ENCODE measurements at regions of chrX and their contacts with region 1.

Region 1: GRCh38 chrX:154547245-154548027 is at the start of gene IKBKG:
- DNase-seq: peak; percentile 86
- ATAC-seq: peak; percentile 81
- H3K4me3 Mint-ChIP-seq: peak within 1 kb of the TSS; percentile 86
- H3K27ac Mint-ChIP-seq: peak within 1 kb of the TSS; percentile 95
- H3K4me1 Mint-ChIP-seq: peaks cover 45% of the 10 kb centered on the region
- H3K27me3 Mint-ChIP-seq: no peaks in the 10 kb centered on the region
- CTCF ChIP-seq: no peak
- total RNA-seq, gene IKBKG: 52.9 and 61.1 TPM in 2 replicates

Region 2: GRCh38 chrX:153627675-153628111 is 919.7 kb before region 1 on chrX:
- CTCF ChIA-PET with region 1: no interaction called
- POLR2A ChIA-PET with region 1: no interaction called
- intact Hi-C with region 1: no loop called
- DNase-seq: no peak
- ATAC-seq: no peak
- H3K4me3 Mint-ChIP-seq: no peak overlapping the region
- H3K27ac Mint-ChIP-seq: no peak overlapping the region
- H3K4me1 Mint-ChIP-seq: no peaks in the 10 kb centered on the region
- H3K27me3 Mint-ChIP-seq: peaks cover 11% of the 10 kb centered on the region
- CTCF ChIP-seq: no peak

Region 3: GRCh38 chrX:154329294-154329693 is 218.1 kb before region 1 on chrX:
- CTCF ChIA-PET with region 1: no interaction called
- POLR2A ChIA-PET with region 1: interaction called, 10 read pairs
- intact Hi-C with region 1: no loop called
- DNase-seq: no peak
- ATAC-seq: no peak
- H3K4me3 Mint-ChIP-seq: no peak overlapping the region
- H3K27ac Mint-ChIP-seq: no peak overlapping the region
- H3K4me1 Mint-ChIP-seq: peaks cover 38% of the 10 kb centered on the region
- H3K27me3 Mint-ChIP-seq: no peaks in the 10 kb centered on the region
- CTCF ChIP-seq: no peak

Region 4: DNA sequence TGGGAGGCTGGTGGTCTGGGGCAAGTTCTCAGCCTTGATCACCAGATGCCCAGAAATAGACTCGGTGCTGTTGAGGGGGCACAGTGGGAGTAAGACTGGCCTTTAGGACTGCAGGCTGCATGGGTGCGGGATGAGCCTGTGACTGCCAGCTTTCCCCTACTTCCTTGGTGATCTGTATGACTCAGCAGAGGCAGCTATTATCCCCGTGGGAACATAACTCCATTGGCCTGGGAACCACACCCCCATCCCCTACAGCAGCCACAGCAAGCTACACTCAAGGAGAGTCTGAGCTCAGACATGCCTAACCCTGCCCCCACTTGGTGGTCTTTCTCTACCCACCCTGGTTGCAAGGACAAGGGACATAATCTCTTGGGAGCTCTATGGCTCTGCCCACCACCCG is 766.3 kb after region 1 on chrX:
- CTCF ChIA-PET with region 1: no interaction called
- POLR2A ChIA-PET with region 1: no interaction called
- intact Hi-C with region 1: no loop called
- DNase-seq: no peak
- ATAC-seq: no peak
- H3K4me3 Mint-ChIP-seq: no peak overlapping the region
- H3K27ac Mint-ChIP-seq: no peak overlapping the region
- H3K4me1 Mint-ChIP-seq: no peaks in the 10 kb centered on the region
- H3K27me3 Mint-ChIP-seq: peaks cover 4% of the 10 kb centered on the region
- CTCF ChIP-seq: no peak